Right cardiac atrium (tissue), 5 donors: ENCODE measurements at regions of chr20 and their contacts with region 1.

Region 1: GRCh38 chr20:354298-355064 is 7.6 kb downstream of the NRSN2 start:
- DNase-seq: peak; percentile 65 to 86 (median 79)
- ATAC-seq: peak; percentile 93
- H3K4me3 ChIP-seq: no peak overlapping the region
- H3K27ac ChIP-seq: no peak overlapping the region
- H3K4me1 ChIP-seq: no peaks in the 10 kb centered on the region
- H3K27me3 ChIP-seq: no peaks in the 10 kb centered on the region

Region 2: DNA sequence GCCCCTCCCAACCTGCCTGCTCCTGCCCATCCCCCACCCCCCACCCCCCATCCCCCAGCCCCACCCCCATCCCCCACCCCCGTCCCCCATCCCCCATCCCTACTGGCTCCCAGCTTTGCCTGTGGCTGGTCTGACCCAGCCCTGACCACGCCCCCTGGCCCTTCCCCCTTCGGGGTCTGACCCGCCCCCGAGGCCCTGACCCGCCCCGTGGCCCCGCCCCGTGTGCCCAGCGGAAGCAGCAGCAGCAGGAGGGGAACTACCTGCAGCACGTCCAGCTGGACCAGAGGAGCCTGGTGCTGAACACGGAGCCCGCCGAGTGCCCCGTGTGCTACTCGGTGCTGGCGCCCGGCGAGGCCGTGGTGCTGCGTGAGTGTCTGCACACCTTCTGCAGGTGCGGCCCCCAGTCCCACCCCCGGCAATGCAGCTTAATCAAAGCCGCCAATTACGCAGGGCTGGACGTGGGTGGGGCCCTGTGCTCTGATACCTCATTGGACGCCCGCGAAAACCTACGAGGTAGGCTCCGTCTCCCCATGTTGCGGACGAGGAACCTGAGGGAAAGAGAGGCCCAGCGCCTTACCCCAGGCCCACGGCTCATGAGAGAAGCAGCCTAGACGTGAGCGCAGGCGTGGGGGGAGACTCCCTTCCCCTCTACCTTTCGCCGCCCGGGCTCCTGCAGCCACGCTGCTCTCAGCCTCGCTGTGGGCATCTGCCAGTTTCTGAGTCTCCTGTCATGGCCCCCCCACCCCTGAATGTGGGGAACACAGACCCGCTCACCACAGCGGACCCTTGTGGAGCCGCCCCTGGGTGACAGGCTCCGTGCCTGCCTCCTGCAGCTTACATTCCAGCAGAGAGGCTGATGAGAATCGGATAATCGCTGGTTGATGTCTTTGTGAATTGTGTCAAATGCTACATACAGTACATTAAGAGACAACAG is 66.4 kb after region 1 on chr20:
- intact Hi-C with region 1: loop called in 2 of 4 experiments (anchors 10 kb)
- DNase-seq: peak in 1 of 3 donors; percentile 69
- ATAC-seq: peak in 1 of 2 donors; percentile 10
- H3K4me3 ChIP-seq: no peak overlapping the region
- H3K27ac ChIP-seq: no peak overlapping the region
- H3K4me1 ChIP-seq: no peaks in the 10 kb centered on the region
- H3K27me3 ChIP-seq: no peaks in the 10 kb centered on the region

Region 3: DNA sequence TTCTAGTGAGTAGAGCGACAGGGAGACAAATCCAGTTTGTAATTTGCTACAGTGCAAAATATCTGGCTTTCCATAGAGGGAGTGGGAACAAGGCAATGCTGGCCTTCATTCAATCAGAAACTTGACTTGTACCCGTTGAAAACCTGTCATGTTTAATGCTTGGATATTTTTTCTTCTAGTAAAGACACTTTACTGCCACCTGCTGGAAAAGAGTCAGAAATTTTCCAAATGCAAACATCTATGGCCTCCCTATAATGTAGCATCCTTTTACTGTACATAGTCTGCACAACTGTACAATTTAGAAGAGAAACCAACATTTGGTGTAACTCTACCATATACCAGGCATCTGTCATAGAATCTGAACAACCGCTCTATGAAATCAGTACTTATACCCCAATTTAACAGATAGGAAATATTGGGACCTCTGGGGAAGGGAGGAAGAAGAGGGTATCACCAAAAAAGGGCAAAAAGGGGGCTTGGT is 124.5 kb after region 1 on chr20:
- intact Hi-C with region 1: loop called (anchors 2 to 5 kb)
- DNase-seq: no peak
- ATAC-seq: no peak
- H3K4me3 ChIP-seq: no peak overlapping the region
- H3K27ac ChIP-seq: no peak overlapping the region
- H3K4me1 ChIP-seq: no peaks in the 10 kb centered on the region
- H3K27me3 ChIP-seq: no peaks in the 10 kb centered on the region

Region 4: GRCh38 chr20:653110-653589 is 298.7 kb after region 1 on chr20 and contains the start of gene SRXN1:
- intact Hi-C with region 1: loop called in 1 of 4 experiments (anchors 10 kb)
- DNase-seq: peak; percentile 92 to 96 (median 96)
- ATAC-seq: peak; percentile 94 to 96
- H3K4me3 ChIP-seq: peak within 1 kb of the TSS; percentile 82
- H3K27ac ChIP-seq: peak within 1 kb of the TSS; percentile 96
- H3K4me1 ChIP-seq: peaks cover 9% of the 10 kb centered on the region
- H3K27me3 ChIP-seq: no peaks in the 10 kb centered on the region
- total RNA-seq, gene SRXN1: 41.0 to 50.2 (median 44.1) TPM

Region 5: GRCh38 chr20:733861-734260 is 379.4 kb after region 1 on chr20:
- intact Hi-C with region 1: loop called in 1 of 4 experiments (anchors 10 kb)
- DNase-seq: no peak
- ATAC-seq: no peak
- H3K4me3 ChIP-seq: no peak overlapping the region
- H3K27ac ChIP-seq: no peak overlapping the region
- H3K4me1 ChIP-seq: no peaks in the 10 kb centered on the region
- H3K27me3 ChIP-seq: no peaks in the 10 kb centered on the region